Gastrocnemius medialis (tissue), 4 donors: ENCODE measurements at regions of chr1 and their contacts with region 1.

Region 1: DNA sequence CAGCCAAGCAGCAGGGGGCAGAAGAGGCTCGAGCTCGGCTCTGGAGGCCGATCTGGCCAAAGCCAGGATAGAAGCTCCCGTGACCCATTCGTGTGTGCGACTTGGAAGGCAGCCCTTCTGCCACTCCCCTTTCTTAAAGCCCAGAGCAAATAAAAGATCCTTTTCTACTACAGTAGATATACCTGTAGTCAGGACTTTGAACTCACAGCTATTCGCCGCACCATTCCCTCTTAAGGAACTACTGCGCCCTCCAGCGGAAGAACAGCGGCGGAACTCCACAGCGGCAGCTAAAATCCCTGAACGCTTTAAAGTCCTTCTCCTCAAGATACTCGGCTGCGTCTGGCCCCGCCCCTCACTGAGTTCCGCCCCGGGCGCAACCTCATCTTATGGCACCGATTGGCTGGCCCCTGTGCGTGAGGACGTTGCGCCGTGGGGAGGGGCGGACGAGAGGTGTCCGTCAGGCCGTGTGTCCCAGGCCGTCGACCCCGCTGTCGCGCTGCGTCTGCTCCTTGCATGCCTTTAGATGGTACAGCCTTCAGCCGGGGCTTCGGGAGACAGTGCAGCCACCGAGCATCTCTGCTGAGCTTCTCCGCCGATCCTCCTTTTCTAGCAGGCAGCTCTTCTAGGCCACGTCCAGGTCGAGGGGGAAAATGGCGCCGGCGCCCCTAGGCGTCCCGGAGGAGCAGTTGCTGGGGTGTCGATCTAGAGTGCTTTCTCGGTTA is at the start of gene LRIG2:
- DNase-seq: peak; percentile 97 to 99
- ATAC-seq: peak; percentile 96 to 99
- H3K4me3 ChIP-seq: peak within 1 kb of the TSS; percentile 69 to 89 (median 79)
- H3K27ac ChIP-seq: peak within 1 kb of the TSS; percentile 87 to 94 (median 91)
- H3K4me1 ChIP-seq: peaks cover 8 to 30% of the 10 kb centered on the region in 2 donors
- H3K27me3 ChIP-seq: no peaks in the 10 kb centered on the region
- CTCF ChIP-seq: peak; percentile 82 to 93 (median 85)
- POLR2A ChIP-seq: peak; percentile 89
- total RNA-seq, gene LRIG2: 4.8 to 9.0 (median 8.9) TPM

Region 2: GRCh38 chr1:111448918-111449702 is 1623.8 kb before region 1 on chr1 and contains the starts of genes ATP5PB and WDR77:
- in situ Hi-C with region 1: no loop called
- intact Hi-C with region 1: loop called (anchors 10 kb)
- DNase-seq: peak; percentile 96 to 98
- ATAC-seq: peak; percentile 98 to 99
- H3K4me3 ChIP-seq: peak within 1 kb of the TSS; percentile 76 to 97 (median 88)
- H3K27ac ChIP-seq: peak within 1 kb of the TSS; percentile 83 to 96 (median 92)
- H3K4me1 ChIP-seq: peaks cover 40 to 42% of the 10 kb centered on the region in 2 donors
- H3K27me3 ChIP-seq: no peaks in the 10 kb centered on the region
- CTCF ChIP-seq: peak in 1 of 5 experiments; percentile 30
- POLR2A ChIP-seq: peak in 1 of 2 donors; percentile 42
- total RNA-seq, gene ATP5PB: 232 to 350 (median 266) TPM
- total RNA-seq, gene WDR77: 53.3 to 59.2 (median 56.7) TPM

Region 3: DNA sequence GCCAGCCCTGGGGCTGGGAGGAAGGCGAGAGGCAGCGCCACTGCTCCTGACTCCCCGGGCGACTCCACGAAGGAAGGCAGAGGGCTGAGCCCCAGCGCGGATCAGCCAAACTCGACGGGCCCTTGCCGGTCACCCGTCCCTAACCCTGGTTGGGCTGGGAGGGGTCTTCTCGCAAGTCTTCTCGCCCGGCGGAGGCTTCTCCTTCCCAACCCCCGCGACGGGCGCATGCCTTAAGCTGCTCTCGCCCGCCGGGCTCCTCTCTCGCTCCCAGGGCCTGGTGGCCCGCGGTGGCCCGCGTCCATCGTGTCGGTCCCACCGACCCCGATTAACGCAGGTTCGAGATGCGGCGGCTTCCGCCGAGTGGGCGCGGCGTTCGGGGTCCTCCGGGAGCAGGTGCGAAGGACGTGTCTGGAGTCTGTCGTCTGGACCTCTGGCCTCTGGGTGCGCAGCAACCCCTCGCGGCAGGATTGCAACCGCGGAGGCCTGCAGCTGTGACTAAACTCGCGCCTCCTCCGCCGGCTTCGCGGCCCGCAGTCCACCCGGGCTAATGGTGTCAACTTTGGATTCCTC is 328.8 kb before region 1 on chr1:
- in situ Hi-C with region 1: loop called in 1 of 4 experiments (anchors 25 kb)
- intact Hi-C with region 1: no loop called
- DNase-seq: no peak
- ATAC-seq: no peak
- H3K4me3 ChIP-seq: peak overlapping the region in 3 of 4 donors; percentile 27 to 40 (median 28)
- H3K27ac ChIP-seq: no peak overlapping the region
- H3K4me1 ChIP-seq: no peaks in the 10 kb centered on the region
- H3K27me3 ChIP-seq: peaks cover 23 to 36% (median 36%) of the 10 kb centered on the region in 3 donors
- CTCF ChIP-seq: no peak
- POLR2A ChIP-seq: no peak

Region 4: DNA sequence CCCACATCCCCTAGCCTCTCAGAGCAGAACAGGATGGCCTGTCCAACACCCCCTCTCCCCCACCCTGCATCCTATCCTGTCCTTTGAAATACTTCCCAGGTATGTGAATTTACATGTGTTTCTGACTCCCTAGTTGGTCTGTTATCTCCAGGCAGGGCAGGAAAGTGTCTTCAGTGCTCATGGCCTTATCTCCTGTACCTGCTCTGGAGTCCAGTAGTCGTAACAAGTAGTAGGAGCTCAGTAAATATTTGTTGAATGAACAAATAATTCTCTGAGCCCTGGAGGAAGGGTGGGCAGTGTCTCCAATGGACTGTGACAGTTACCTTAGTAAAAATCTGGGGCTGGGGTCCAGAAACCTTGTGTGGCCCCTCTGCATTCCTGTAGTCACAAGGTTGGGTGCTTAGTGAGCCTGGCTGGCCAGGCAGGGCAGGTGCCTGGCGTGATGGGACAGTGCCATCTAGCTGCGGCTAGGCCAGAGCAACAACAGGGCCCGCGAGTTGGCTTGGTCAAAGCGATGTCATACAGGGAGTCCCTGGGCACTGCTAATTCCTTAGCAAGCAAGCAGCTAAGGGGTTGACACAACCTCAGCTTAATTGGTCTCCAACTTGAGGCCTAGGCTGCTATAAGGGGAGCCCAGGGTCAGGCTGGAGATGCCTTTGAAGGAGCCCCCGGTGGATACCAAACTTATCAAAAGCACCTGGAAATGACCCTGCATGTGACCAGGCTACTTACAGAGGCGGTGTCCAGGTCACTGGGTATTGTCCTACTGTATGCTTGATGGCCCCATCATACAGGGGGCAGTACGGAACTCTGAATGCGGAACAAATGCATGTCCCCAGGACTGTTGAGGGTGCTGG is 268.8 kb before region 1 on chr1:
- in situ Hi-C with region 1: no loop called
- intact Hi-C with region 1: loop called (anchors 10 kb)
- DNase-seq: peak; percentile 52 to 63
- ATAC-seq: peak; percentile 50 to 65
- H3K4me3 ChIP-seq: no peak overlapping the region
- H3K27ac ChIP-seq: no peak overlapping the region
- H3K4me1 ChIP-seq: peaks cover 12 to 19% of the 10 kb centered on the region in 2 donors
- H3K27me3 ChIP-seq: no peaks in the 10 kb centered on the region
- CTCF ChIP-seq: peak; percentile 64 to 84 (median 79)
- POLR2A ChIP-seq: no peak

Region 5: DNA sequence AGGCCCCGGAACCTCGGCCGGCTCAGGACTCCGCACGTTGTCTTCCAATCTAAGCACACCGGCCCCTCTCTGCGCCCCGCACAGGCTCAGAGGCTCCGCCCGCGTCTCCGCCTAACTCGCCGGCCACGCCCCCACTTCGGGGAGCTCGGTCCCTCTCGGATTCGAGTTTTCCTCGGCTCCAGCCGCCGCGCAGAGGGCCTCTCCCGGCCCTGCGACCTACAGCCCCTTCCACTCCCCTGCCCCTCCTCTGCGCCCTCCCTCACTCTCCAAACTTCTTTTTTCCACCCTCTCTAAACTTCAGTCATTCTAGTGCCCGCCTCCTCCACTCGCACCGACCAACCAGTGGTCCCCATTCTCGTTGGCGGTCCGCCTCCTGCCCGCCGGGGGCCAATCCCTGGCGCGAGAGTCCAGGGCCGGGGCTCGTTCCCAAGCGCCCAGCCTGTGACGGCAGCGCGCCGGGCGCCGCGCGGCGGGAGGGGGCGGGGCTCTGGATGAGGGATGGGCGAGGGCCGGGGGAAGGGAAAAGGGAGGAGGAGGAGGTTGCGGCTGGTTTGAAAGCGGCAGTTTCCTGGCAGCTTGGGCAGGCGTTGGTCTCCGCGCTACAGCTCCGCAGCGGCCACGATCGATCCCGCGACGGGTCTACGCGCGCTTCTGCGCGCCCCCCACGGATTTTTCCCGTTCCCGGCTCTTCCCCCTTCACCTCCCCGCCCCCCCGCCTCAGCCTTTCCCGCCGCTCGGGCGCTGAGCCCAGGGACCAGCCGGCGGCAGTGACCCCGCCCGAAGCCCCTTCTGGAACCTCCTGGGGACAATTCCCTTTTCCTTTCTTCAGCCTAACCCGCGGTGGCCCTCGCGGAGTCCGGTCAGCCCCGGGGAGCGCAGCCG is 317.3 kb after region 1 on chr1 and contains the start of gene MAGI3:
- in situ Hi-C with region 1: no loop called
- intact Hi-C with region 1: loop called (anchors 10 kb)
- DNase-seq: peak; percentile 93 to 94
- ATAC-seq: peak; percentile 88 to 90
- H3K4me3 ChIP-seq: peak within 1 kb of the TSS; percentile 79 to 96 (median 90)
- H3K27ac ChIP-seq: peak within 1 kb of the TSS; percentile 77 to 86 (median 82)
- H3K4me1 ChIP-seq: peaks cover 20 to 24% of the 10 kb centered on the region in 2 donors
- H3K27me3 ChIP-seq: no peaks in the 10 kb centered on the region
- CTCF ChIP-seq: no peak
- POLR2A ChIP-seq: peak; percentile 62 to 76
- total RNA-seq, gene MAGI3: 2.8 to 4.1 (median 4.0) TPM

Region 6: GRCh38 chr1:113677250-113678158 is 604.6 kb after region 1 on chr1:
- in situ Hi-C with region 1: no loop called
- intact Hi-C with region 1: loop called (anchors 2 kb)
- DNase-seq: peak; percentile 19 to 66
- ATAC-seq: peak; percentile 72 to 95
- H3K4me3 ChIP-seq: no peak overlapping the region
- H3K27ac ChIP-seq: no peak overlapping the region
- H3K4me1 ChIP-seq: peaks cover 7 to 8% of the 10 kb centered on the region in 2 donors
- H3K27me3 ChIP-seq: no peaks in the 10 kb centered on the region
- CTCF ChIP-seq: peak in 4 of 5 experiments; percentile 30 to 60 (median 52)
- POLR2A ChIP-seq: no peak

Region 7: DNA sequence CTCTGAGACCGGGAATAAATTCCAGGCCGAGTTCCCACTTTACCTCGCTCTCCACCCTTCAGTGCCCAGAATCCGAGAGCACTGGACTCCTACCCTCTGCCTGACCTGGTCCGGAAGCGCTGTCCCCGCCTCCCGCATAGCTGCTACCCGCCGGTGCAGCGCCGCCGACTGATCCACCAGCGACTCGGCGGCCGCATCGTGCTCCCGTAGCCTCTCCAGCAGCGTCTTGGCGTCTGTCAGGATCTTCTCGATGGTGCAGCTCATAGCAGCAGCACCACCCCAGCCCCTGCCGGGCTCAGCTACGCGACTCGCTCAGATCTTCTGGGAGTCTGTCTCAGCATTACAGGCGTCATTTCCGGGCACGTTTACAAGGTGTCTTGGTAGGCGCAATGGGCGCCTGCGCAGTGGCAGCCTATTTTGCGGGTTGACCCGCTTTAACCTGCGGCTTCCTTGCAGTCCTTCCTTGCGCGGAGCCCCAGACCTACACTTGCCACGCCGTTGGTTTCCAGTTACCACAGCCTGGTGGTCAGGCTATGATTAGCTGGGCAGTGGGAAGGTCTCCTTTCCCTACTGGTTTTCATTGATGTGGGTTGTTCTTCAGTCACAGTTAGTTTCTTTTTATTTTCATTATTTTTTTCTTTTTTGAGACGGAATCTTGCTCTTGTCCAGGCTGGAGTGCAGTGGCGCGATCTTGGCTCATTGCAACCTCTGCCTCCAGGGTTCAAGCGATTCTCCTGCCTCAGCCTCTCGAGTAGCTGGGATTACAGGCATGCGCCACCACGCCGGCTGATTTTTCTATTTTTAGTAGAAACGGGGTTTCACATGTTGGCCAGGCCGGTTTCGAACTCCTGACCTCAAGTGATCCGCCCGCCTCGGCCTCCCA is 1707.7 kb after region 1 on chr1 and contains the start of gene SIKE1:
- in situ Hi-C with region 1: no loop called
- intact Hi-C with region 1: loop called (anchors 10 kb)
- DNase-seq: peak; percentile 89 to 97
- ATAC-seq: peak; percentile 98 to 99
- H3K4me3 ChIP-seq: peak within 1 kb of the TSS; percentile 72 to 89 (median 86)
- H3K27ac ChIP-seq: peak within 1 kb of the TSS; percentile 92 to 97 (median 94)
- H3K4me1 ChIP-seq: peaks cover 21 to 25% of the 10 kb centered on the region in 2 donors
- H3K27me3 ChIP-seq: no peaks in the 10 kb centered on the region
- CTCF ChIP-seq: peak in 3 of 5 experiments; percentile 12 to 29 (median 20)
- POLR2A ChIP-seq: peak; percentile 90 to 93
- total RNA-seq, gene SIKE1: 25.7 to 37.8 (median 36.3) TPM